ENCODE measurements at regions of chr10 and their contacts with region 1.

Region 1: DNA sequence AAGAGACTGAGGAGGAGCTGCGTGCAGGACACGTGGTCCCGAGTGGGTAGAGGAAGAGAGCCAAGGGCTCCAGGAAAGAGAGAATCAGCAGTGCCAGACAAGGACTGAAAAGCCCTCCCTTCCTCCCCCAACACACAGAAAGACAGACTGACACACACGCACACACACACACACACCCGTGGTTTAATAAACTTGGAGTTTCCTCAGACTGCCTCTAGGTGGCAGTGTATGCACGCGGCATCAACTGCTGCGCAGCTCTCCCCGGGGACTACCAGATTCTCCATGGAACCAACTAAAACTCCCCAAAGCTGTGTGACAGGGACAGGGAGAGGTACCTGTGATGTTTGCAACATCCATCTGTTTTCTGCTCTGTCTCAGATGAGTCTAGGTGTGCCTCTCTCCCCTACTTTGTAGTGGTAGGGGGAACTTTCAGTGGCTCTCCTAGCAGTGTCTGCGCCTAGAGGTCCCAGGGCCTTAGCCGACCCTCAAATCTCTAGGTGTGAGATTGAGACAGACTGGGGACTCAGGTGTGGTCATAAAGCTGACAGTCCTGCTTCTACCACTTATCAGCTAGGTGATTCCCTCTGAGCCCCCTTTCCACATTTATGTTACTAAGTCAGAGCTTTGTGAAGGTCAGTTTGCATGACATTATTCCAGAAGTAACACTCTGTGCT is 9.3 kb upstream of the TSPAN14 start:
- DNase-seq: peak; percentile 48 to 60
- H3K4me3 ChIP-seq: no peak overlapping the region
- H3K27ac ChIP-seq: no peak overlapping the region
- H3K4me1 ChIP-seq: peaks cover 23% of the 10 kb centered on the region
- H3K27me3 ChIP-seq: no peaks in the 10 kb centered on the region
- CTCF ChIP-seq: peak; percentile 73

Region 2: DNA sequence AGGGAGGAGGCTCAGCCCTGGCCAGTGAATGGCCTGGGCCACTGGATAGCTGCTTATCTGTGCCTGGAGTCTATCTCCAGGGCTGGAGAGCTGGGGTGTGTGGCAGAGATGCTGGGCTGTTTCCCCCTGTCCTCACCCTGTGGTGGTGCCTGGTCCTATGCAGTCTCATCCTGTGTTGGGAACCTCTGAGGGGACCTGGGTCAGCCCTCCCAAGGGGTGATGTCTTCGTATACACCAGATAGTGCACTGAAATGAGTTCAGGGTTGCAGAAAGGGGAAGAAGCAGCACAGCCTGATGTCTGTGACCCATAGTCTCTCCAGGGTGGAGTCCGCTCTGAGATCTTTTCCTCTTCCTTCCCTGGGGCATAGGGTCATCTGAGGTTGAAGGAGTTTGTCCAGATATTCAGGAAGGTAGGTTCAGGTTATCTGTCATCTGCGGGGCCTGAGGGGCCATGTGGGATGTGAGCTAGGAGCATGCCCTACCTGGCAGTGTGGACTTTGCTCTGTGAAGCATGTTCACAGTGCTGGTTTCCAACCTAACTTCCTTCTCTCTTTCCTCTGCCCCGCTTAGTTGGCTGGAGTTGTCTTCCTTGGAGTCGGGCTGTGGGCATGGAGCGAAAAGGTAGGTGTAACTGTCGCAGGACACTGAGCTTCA is 59.5 kb after region 1 on chr10:
- CTCF ChIA-PET with region 1: interaction called, 46 read pairs
- POLR2A ChIA-PET with region 1: interaction called, 6 read pairs
- intact Hi-C with region 1: loop called (anchors 1 kb)
- DNase-seq: peak; percentile 41 to 65
- H3K4me3 ChIP-seq: peak overlapping the region; percentile 8; the same call in 1 of the 2 replicates
- H3K27ac ChIP-seq: peak overlapping the region; percentile 99
- H3K4me1 ChIP-seq: peaks cover 100% of the 10 kb centered on the region
- H3K27me3 ChIP-seq: no peaks in the 10 kb centered on the region
- CTCF ChIP-seq: no peak

Region 3: GRCh38 chr10:80535671-80536365 is 91.0 kb after region 1 on chr10:
- CTCF ChIA-PET with region 1: interaction called, 5 read pairs
- POLR2A ChIA-PET with region 1: no interaction called
- intact Hi-C with region 1: loop called (anchors 1 kb)
- DNase-seq: peak; percentile 57 to 80
- H3K4me3 ChIP-seq: peak overlapping the region; percentile 67
- H3K27ac ChIP-seq: no peak overlapping the region
- H3K4me1 ChIP-seq: 0 out of 2 replicates have a peak, but pooled peaks cover 6% of the 10 kb centered on the region
- H3K27me3 ChIP-seq: no peaks in the 10 kb centered on the region
- CTCF ChIP-seq: peak; percentile 89

Region 4: GRCh38 chr10:80662577-80663261 is 217.9 kb after region 1 on chr10:
- CTCF ChIA-PET with region 1: no interaction called
- POLR2A ChIA-PET with region 1: no interaction called
- intact Hi-C with region 1: loop called (anchors 5 kb)
- DNase-seq: peak in 1 of 2 experiments; percentile 75
- H3K4me3 ChIP-seq: no peak overlapping the region
- H3K27ac ChIP-seq: no peak overlapping the region
- H3K4me1 ChIP-seq: no peaks in the 10 kb centered on the region
- H3K27me3 ChIP-seq: peaks cover 38% of the 10 kb centered on the region
- CTCF ChIP-seq: peak; percentile 97

Measured in PC-9 (cell line).